SK-N-SH (cell line): ENCODE measurements at regions of chr1 and their contacts with region 1.

Region 1: DNA sequence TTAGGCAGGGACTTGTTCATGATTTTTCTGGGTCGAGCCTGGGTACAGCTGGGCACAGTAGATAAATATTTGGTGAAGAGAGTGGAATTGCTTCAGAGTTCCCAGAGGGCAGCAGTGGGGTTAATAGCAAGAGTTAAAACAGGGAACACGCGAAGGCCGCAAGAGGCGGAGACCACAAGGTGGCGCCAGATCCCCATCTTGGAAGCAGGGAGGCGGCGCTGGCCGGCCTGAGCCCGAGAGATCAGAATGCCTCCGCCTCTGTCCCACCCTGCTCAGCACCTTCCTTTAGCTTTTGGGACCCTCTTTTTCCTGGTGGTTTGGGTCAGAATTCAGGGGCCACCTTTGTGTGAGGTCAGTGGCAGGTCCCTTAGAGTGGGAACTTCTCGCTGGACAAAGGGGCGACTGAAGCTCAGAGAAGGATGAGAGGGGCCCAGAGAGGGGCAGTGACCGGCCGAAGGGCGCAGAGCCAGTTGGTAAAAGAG is 6.5 kb upstream of the PADI2 start:
- DNase-seq: peak; percentile 90
- H3K4me3 ChIP-seq: peak overlapping the region in 1 of 2 experiments; percentile 12; a peak in 1 of 4 replicates
- H3K27ac ChIP-seq: no peak overlapping the region
- H3K4me1 ChIP-seq: peaks cover 0 to 32% of the 10 kb centered on the region in 2 experiments; a peak in 3 of 4 replicates
- H3K27me3 ChIP-seq: no peaks in the 10 kb centered on the region
- CTCF ChIP-seq: peak; percentile 94
- EP300 ChIP-seq: no peak
- RAD21 ChIP-seq: peak; percentile 97

Region 2: DNA sequence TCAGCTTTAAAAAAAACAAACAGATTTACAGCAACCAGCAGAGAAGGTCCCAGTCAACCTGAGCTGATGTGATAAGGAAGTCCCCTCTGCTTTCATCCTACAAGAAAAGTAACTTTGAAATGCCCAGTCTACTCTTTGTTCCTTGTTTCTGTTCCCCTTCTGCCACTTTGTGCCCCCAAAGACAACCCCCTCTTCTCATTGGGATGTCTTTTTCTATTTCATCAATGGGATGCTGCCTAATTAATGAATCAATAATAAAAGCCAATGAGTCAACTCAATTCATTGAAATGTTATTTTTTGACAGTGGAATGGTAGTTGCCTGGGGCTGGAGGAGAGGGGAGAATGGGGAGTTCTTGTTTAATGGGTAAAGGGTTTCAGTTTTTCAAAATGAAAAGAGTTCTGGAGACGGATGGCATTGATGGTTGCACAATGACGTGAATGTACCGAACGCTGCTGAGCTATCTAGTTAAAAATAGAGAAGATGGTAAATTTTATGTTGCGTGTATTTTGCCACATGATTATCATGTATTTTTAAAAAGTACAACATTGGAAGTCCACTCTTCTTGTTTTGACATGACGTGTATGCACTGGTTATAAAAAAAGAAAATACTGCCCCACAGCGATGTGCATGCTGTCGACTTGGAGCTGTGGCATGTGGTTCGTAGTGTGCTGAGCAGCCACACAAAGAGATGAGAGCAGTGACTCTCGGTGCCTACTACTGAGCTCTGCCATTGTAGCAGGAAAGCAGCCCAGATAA is 15.8 kb after region 1 on chr1:
- CTCF ChIA-PET with region 1: interaction called, 46 read pairs
- POLR2A ChIA-PET with region 1: no interaction called
- DNase-seq: no peak
- H3K4me3 ChIP-seq: no peak overlapping the region
- H3K27ac ChIP-seq: no peak overlapping the region
- H3K4me1 ChIP-seq: no peaks in the 10 kb centered on the region
- H3K27me3 ChIP-seq: no peaks in the 10 kb centered on the region
- CTCF ChIP-seq: no peak
- EP300 ChIP-seq: no peak
- RAD21 ChIP-seq: no peak

Region 3: GRCh38 chr1:17227358-17227915 is 101.6 kb after region 1 on chr1:
- CTCF ChIA-PET with region 1: interaction called, 462 read pairs
- POLR2A ChIA-PET with region 1: no interaction called
- DNase-seq: no peak
- H3K4me3 ChIP-seq: no peak overlapping the region
- H3K27ac ChIP-seq: no peak overlapping the region
- H3K4me1 ChIP-seq: peaks cover 0 to 6% of the 10 kb centered on the region in 2 experiments; a peak in 1 of 4 replicates
- H3K27me3 ChIP-seq: no peaks in the 10 kb centered on the region
- CTCF ChIP-seq: no peak
- EP300 ChIP-seq: no peak
- RAD21 ChIP-seq: no peak

Region 4: DNA sequence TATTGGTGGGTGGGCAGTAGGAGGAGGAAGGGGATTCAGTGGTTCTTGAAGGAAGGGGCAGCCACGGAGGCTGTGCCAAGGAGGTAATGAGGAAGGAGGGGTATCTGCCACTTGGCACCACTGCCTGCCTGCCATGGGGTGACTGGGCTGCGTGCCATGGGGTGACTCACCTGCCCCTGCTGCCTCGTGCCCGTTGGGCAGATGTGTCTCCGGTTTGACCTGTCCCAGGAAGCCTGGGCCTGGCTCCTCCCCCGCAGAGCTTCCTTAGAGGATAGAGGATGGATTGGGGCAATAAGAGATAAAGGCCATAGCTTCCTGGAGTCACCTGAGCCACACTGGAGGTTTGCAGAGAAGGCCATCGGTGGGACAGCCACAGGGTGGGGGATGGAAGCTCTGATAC is 124.8 kb after region 1 on chr1:
- CTCF ChIA-PET with region 1: interaction called, 462 read pairs
- POLR2A ChIA-PET with region 1: no interaction called
- DNase-seq: no peak
- H3K4me3 ChIP-seq: no peak overlapping the region
- H3K27ac ChIP-seq: no peak overlapping the region
- H3K4me1 ChIP-seq: peaks cover 4 to 8% of the 10 kb centered on the region in 2 experiments; a peak in 1 of 4 replicates
- H3K27me3 ChIP-seq: no peaks in the 10 kb centered on the region
- CTCF ChIP-seq: no peak
- EP300 ChIP-seq: peak in 1 of 2 experiments; percentile 36; a peak in 1 of 4 replicates
- RAD21 ChIP-seq: no peak

Region 5: GRCh38 chr1:17405898-17406759 is 280.3 kb after region 1 on chr1:
- CTCF ChIA-PET with region 1: interaction called, 11 read pairs
- POLR2A ChIA-PET with region 1: no interaction called
- DNase-seq: peak; percentile 90
- H3K4me3 ChIP-seq: no peak overlapping the region
- H3K27ac ChIP-seq: no peak overlapping the region; a peak in 1 of 4 replicates
- H3K4me1 ChIP-seq: peaks cover 0 to 8% of the 10 kb centered on the region in 2 experiments; a peak in 1 of 4 replicates
- H3K27me3 ChIP-seq: no peaks in the 10 kb centered on the region
- CTCF ChIP-seq: peak; percentile 81
- EP300 ChIP-seq: no peak
- RAD21 ChIP-seq: peak; percentile 71